ENCODE measurements at regions of chr15 and their contacts with region 1.

Region 1: GRCh38 chr15:91632176-91632575 is 221.3 kb upstream of the SLCO3A1 start:
- DNase-seq: no peak

Region 2: DNA sequence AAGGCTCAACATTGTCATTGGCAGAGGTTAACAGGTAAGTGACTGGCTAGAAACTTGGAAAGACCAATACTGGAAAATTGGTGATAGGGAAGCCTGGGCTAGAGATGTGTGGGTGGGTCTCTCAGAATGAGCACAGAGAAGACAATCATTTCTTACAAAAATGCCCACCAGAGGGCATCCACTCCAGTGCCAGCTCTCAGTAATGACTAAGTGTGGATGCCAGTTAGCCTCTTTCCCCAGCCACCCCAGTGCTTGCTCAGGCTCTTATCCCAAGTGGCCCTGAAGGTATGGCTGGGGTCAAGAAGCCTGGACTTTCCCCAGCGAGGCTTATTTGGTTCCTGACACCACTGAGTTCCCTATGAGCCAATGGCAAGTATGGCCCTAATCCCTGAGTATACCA is 645.6 kb after region 1 on chr15:
- intact Hi-C with region 1: loop called in 1 of 2 experiments (anchors 10 kb)
- DNase-seq: no peak

Measured in posterior vena cava (tissue), 2 donors.